PC-9 (cell line): ENCODE measurements at regions of chr9 and their contacts with region 1.

Region 1: GRCh38 chr9:101398068-101398929 is at the starts of genes MRPL50 and ZNF189:
- DNase-seq: peak; percentile 96 to 97
- H3K4me3 ChIP-seq: peak within 1 kb of the TSS; percentile 84
- H3K27ac ChIP-seq: peak within 1 kb of the TSS; percentile 35
- H3K4me1 ChIP-seq: peaks cover 19% of the 10 kb centered on the region
- H3K27me3 ChIP-seq: no peaks in the 10 kb centered on the region
- CTCF ChIP-seq: no peak
- total RNA-seq, gene MRPL50: 7.6 and 11.9 TPM in 2 replicates
- total RNA-seq, gene ZNF189: 5.9 and 9.4 TPM in 2 replicates

Region 2: GRCh38 chr9:99819856-99820684 is 1578.2 kb before region 1 on chr9:
- CTCF ChIA-PET with region 1: no interaction called
- POLR2A ChIA-PET with region 1: no interaction called
- intact Hi-C with region 1: loop called (anchors 5 kb)
- DNase-seq: peak; percentile 70 to 89
- H3K4me3 ChIP-seq: peak overlapping the region; percentile 87
- H3K27ac ChIP-seq: peak overlapping the region; percentile 68
- H3K4me1 ChIP-seq: peaks cover 32% of the 10 kb centered on the region
- H3K27me3 ChIP-seq: peaks cover 20% of the 10 kb centered on the region
- CTCF ChIP-seq: no peak

Region 3: DNA sequence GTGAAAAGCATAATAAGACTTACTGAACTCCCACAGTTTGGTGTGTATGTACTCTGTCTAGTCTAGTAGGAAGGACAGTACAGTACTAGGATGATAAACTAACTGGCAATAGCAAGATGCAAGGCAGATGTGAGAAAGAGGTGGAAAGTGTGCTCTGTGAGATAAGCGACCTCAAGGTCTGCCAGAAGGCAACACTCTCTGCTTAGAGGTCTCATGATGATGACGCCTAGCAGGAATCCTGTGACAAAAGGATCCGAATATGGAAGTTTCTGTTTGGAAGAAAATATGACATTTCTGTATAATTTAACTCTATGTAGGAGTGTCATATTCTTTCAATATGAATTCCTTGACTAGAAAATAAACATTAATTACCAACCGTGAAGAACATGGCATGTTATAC is 257.5 kb before region 1 on chr9:
- CTCF ChIA-PET with region 1: no interaction called
- POLR2A ChIA-PET with region 1: interaction called, 10 read pairs
- intact Hi-C with region 1: no loop called
- DNase-seq: no peak
- H3K4me3 ChIP-seq: no peak overlapping the region
- H3K27ac ChIP-seq: no peak overlapping the region
- H3K4me1 ChIP-seq: no peaks in the 10 kb centered on the region
- H3K27me3 ChIP-seq: no peaks in the 10 kb centered on the region
- CTCF ChIP-seq: no peak

Region 4: GRCh38 chr9:101449140-101449721 is 50.9 kb after region 1 on chr9:
- CTCF ChIA-PET with region 1: no interaction called
- POLR2A ChIA-PET with region 1: interaction called, 10 read pairs
- intact Hi-C with region 1: no loop called
- DNase-seq: peak; percentile 66 to 67
- H3K4me3 ChIP-seq: peak overlapping the region; percentile 64
- H3K27ac ChIP-seq: no peak overlapping the region
- H3K4me1 ChIP-seq: no peaks in the 10 kb centered on the region
- H3K27me3 ChIP-seq: peaks cover 12% of the 10 kb centered on the region; the same call in 1 of the 2 replicates
- CTCF ChIP-seq: peak; percentile 71

Region 5: DNA sequence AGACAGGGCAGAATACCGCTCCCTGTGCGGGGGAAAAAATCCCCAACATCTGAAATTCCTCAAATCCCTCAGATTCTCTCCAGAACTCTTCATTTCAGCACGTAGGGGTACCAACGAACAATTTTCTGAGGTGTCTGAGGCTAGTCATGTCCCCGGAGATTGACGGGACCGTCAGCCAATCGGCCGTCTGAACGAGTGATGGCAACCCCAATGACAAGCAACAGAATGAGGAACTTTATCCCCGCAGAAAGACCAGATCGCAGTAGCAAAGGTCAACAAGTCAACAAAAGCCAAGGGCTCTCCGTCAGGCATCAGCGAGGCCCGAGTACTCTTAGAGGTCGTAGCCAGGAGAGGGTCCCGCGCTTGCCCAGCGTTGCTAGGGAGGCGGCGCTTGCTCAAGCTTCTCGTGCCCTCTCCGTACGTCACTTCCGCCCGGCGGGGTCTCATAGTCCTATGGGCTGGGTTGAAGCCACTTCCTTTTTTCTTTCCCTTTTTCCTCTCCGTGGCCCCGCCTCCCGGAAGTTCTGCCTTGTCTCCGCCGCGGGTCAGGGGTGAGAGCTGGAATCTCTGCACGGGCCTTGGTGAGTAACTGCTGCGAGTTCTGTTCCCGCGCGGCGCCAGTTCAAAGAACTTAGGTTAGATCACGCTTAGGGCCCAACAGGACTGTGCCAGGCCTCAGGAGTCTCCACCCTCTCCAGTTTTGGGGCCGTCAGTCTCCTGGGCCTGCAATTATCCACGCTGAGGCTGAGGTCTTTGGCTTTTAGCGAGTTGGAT is 135.2 kb after region 1 on chr9 and contains the start of gene RNF20:
- CTCF ChIA-PET with region 1: no interaction called
- POLR2A ChIA-PET with region 1: interaction called, 10 read pairs
- intact Hi-C with region 1: loop called (anchors 1 kb)
- DNase-seq: peak; percentile 96 to 98
- H3K4me3 ChIP-seq: peak within 1 kb of the TSS; percentile 63
- H3K27ac ChIP-seq: peak within 1 kb of the TSS; percentile 65
- H3K4me1 ChIP-seq: peaks cover 9% of the 10 kb centered on the region
- H3K27me3 ChIP-seq: no peaks in the 10 kb centered on the region
- CTCF ChIP-seq: no peak
- total RNA-seq, gene RNF20: 55.8 and 58.7 TPM in 2 replicates

Region 6: DNA sequence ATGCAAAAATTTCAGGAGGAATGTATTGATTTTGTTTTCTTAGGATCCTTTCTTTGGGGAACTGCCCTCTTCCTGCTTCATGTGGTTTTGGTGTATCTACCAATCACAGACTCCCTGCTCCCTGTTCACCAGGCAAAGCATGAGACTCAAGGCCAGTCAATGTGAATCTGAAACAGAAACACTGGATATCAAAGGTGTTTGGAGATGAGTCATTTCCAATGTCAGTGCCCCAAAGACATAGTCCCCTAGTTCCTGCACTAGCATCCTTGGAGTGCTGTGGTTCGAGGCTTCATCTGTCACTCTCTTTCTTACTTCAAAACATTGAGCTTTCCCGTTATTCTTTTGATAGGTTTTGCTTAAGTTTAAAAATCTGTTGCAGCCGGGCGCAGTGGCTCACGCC is 188.4 kb after region 1 on chr9:
- CTCF ChIA-PET with region 1: no interaction called
- POLR2A ChIA-PET with region 1: interaction called, 13 read pairs
- intact Hi-C with region 1: no loop called
- DNase-seq: no peak
- H3K4me3 ChIP-seq: no peak overlapping the region
- H3K27ac ChIP-seq: no peak overlapping the region
- H3K4me1 ChIP-seq: no peaks in the 10 kb centered on the region
- H3K27me3 ChIP-seq: no peaks in the 10 kb centered on the region
- CTCF ChIP-seq: no peak